Activated T-helper 1 cell treated with anti-CD3 and anti-CD28 coated beads, Interleukin-12 subunit alpha, Interleukin-12 subunit beta, Interleukin-2, Interleukin-4 antibody, amounts not matched to agents 30 ng/mL and 10 ng/mL and 1 ng/mL, durations not matched to agents 14 hours and 24 hours and 36 hours (primary cell): ENCODE measurements at regions of chr11 and their contacts with region 1.

Region 1: DNA sequence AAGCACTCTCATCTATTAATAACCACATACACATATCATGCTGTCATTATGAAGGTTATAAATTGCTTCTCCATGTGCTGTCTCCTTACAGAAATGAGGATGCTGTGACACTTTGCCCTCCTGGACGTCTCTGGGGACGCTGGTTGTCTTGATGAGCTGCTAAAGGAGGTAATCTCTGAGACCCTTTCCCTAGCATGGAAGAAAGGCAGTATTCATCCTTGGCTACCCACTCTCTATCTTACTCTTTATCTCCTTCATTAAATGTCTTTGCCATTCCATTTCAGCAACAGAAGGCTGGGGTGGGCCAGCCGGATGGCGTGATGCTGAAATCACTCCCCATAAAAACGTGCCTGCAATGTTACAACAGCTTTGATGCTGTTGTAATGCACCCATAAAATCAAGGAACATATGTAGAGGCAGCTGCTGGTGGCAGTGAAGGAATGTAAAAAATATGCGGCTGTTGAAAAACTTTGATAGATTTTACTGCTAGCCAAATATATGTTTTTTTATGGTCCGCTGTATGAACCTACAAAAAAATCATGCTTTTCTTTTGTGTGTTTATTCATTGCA is 715.1 kb upstream of the API5 start:
- DNase-seq: no peak
- H3K4me3 Mint-ChIP-seq: no peak overlapping the region
- H3K27ac Mint-ChIP-seq: no peak overlapping the region
- H3K4me1 Mint-ChIP-seq: no peaks in the 10 kb centered on the region
- H3K27me3 Mint-ChIP-seq: no peaks in the 10 kb centered on the region

Region 2: GRCh38 chr11:42543844-42544419 is 52.7 kb before region 1 on chr11:
- intact Hi-C with region 1: loop called (anchors 10 kb)
- DNase-seq: no peak
- H3K4me3 Mint-ChIP-seq: no peak overlapping the region
- H3K27ac Mint-ChIP-seq: no peak overlapping the region
- H3K4me1 Mint-ChIP-seq: no peaks in the 10 kb centered on the region
- H3K27me3 Mint-ChIP-seq: no peaks in the 10 kb centered on the region